GM13976 (cell line): ENCODE measurements at regions of chr2 and their contacts with region 1.

Region 1: GRCh38 chr2:160970052-160970965 is 189.9 kb upstream of the TANK start:
- DNase-seq: peak; percentile 22
- CTCF ChIP-seq: peak; percentile 22

Region 2: DNA sequence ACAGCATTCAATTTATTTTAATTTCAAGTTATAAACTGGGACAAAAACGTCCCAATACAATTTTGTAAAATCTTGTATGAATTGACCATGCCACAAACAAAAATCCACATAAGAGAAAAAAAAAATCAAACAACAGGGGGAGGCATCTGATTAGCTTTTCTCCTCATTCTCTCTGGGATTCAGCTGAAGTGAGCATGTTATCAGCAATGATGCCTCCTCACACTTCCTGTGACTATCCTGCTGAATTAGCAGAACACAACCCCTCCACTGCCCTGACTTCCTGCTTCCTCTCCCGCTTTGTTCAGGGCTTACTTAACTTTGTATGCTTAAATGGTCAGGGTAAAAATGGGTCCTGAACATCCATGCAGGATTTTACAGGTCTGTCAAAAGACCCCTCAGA is 638.0 kb before region 1 on chr2:
- in situ Hi-C with region 1: loop called (anchors 25 kb)
- DNase-seq: no peak
- CTCF ChIP-seq: no peak

Region 3: DNA sequence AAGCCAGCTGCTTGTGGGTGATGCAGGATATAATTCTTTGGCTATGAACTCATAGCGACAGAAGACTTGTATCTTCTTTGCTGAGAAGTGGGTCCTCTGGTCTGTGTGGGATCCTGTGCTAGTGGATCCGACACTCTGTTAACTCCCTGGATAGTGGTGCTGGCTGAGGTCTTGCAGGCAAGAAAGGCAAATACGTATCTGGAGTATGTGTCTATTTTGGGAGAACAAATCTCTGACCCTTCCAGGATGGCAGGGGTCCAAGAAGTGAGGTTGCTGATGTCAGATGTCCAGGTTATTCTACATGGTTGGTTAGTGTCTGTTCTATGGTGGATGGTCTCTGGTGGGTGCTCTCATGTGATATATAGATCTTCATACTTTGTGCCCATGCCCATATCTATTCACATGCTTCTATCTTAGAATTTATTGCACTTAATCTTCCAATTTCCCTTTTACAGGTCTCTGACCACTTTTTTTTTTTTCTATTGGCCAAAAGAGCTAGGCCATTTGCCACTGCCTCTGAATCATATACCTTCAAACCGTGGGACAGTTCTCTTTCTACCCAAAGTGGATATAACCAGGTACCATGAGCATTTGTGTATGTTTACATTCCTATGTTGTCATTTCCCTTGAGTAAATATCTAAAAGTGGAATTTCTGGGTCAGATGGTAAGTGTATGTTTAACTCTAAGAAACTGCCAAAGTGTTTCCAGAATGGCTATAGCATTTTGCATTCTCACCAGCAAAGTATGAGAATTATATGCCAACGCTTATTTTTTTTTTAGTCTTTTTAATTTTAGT is 431.6 kb before region 1 on chr2:
- in situ Hi-C with region 1: no loop called
- DNase-seq: no peak
- CTCF ChIP-seq: no peak